ENCODE measurements at regions of chr12 and their contacts with region 1.

Region 1: DNA sequence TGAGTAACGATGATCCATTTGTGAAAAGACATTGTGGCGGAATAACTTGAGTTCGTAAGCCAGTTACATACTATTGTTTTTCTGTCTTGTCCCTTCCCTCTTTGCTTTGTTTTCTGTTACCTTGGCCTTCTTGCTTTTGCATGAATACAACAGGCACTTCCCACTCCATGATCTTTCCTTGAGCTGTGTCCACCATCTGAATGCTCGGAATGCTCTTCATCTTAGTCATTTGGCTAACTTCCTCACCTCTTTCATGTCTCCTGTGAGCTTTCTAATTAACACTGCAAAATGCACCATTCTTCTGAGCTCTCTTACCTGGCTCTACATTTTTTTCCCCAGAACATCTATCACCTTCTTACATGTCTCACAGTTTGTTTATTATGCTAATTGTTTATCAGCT is 10.0 kb downstream of the KNTC1 start:
- DNase-seq: no peak
- ATAC-seq: no peak
- H3K4me3 Mint-ChIP-seq: no peak overlapping the region
- H3K27ac Mint-ChIP-seq: no peak overlapping the region
- H3K4me1 Mint-ChIP-seq: peaks cover 10% of the 10 kb centered on the region
- H3K27me3 Mint-ChIP-seq: no peaks in the 10 kb centered on the region

Region 2: DNA sequence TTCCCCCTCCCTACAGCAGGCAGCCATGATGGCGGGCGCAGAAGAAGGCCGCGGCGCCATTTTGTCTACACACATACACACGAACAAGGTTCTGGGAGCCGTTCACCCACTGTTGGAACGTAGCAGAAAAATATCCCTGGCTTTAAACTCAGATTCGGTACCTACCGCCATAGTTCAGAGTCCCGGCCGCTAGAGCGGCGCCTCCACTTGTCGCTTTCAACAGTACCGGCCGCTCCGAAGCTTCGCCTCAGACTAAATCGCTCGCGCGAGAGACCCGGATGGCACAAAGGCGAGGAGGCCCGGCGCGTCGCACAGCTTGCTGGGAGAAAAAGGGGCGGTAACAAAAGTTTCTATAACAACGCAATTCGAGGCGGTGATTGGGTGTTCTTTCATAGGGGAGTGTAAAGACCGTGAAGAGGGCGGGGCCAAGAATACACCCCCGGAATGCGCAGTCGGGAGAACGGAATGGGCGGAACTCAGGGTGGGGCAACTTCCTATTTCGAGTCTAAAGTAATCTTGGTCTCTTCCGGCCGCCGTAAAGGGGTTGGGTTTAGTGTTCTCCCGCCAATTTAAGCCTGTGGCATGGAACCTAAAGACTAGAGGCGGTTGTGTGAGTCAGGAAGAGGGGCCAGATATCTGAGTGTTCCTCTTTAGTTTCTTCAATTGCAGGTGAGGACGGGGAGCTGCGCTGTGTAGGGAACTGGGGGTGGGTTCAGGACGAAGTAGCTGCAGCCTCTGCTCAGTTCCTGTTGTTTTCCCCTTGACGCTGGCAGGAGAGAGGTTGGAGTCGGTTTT is 10.1 kb before region 1 on chr12 and contains the starts of genes KNTC1 and RSRC2:
- POLR2A ChIA-PET with region 1: interaction called, 17 read pairs
- DNase-seq: peak; percentile 91
- ATAC-seq: peak; percentile 91
- H3K4me3 Mint-ChIP-seq: no peak within 1 kb of the TSS
- H3K27ac Mint-ChIP-seq: no peak within 1 kb of the TSS
- H3K4me1 Mint-ChIP-seq: peaks cover 34% of the 10 kb centered on the region
- H3K27me3 Mint-ChIP-seq: no peaks in the 10 kb centered on the region
- total RNA-seq, gene KNTC1: 125 to 130 TPM
- total RNA-seq, gene RSRC2: 108 to 115 TPM

Region 3: DNA sequence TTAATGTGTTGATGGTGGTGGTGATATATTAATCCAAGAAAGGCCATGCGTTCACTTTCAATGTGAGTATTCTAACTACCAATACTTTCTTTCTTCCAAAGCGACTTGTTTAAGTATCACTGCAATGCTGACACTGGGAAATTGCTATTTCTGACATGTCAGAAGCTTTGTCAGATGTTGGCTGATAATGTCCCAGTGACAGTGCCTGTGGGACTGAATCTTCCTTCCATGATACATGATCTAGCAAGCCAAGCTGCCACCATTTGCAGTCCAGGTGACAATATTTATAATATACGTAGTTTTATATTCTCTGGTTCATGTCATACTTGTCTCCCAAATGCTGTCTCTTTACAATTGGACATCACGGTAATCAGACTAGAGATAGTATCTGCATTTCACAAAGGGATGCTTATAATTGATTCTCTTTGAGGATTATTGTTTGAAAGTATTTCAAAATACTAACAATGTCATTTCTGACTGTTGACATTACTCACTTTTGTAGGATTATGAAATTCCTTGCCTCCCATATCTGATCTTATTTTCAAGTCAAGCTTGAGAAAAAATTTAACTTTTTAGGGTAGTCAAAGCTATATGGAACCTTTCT is 47.3 kb after region 1 on chr12:
- POLR2A ChIA-PET with region 1: no interaction called
- DNase-seq: no peak
- ATAC-seq: no peak
- H3K4me3 Mint-ChIP-seq: no peak overlapping the region
- H3K27ac Mint-ChIP-seq: no peak overlapping the region
- H3K4me1 Mint-ChIP-seq: no peaks in the 10 kb centered on the region
- H3K27me3 Mint-ChIP-seq: no peaks in the 10 kb centered on the region